ENCODE measurements at regions of chr17 and their contacts with region 1.

Region 1: GRCh38 chr17:76264755-76265596 is at the start of gene UBALD2:
- DNase-seq: peak; percentile 97 to 99 (median 98)
- ATAC-seq: peak; percentile 90
- H3K4me3 ChIP-seq: peak within 1 kb of the TSS; percentile 91
- H3K27ac ChIP-seq: peak within 1 kb of the TSS; percentile 83
- H3K4me1 ChIP-seq: peaks cover 37 to 38% of the 10 kb centered on the region in 2 experiments
- H3K27me3 ChIP-seq: no peaks in the 10 kb centered on the region
- CTCF ChIP-seq: no peak
- EP300 ChIP-seq: peak; percentile 8; the same call in 1 of the 2 replicates
- POLR2A ChIP-seq: peak; percentile 68
- RAD21 ChIP-seq: no peak
- polyA plus RNA-seq, gene UBALD2: 2.3 to 3.9 TPM

Region 2: GRCh38 chr17:76166168-76166567 is 98.8 kb before region 1 on chr17:
- CTCF ChIA-PET with region 1: no interaction called
- POLR2A ChIA-PET with region 1: interaction called, 13 read pairs
- in situ Hi-C with region 1: no loop called
- intact Hi-C with region 1: no loop called
- DNase-seq: no peak
- ATAC-seq: no peak
- H3K4me3 ChIP-seq: no peak overlapping the region
- H3K27ac ChIP-seq: no peak overlapping the region
- H3K4me1 ChIP-seq: peaks cover 5 to 9% of the 10 kb centered on the region in 2 experiments; a peak in 4 of 5 replicates
- H3K27me3 ChIP-seq: no peaks in the 10 kb centered on the region
- CTCF ChIP-seq: no peak
- EP300 ChIP-seq: no peak
- POLR2A ChIP-seq: no peak
- RAD21 ChIP-seq: no peak

Region 3: GRCh38 chr17:76191896-76192295 is 73.1 kb before region 1 on chr17:
- CTCF ChIA-PET with region 1: no interaction called
- POLR2A ChIA-PET with region 1: interaction called, 16 read pairs
- in situ Hi-C with region 1: loop called (anchors 5 kb)
- intact Hi-C with region 1: loop called (anchors 5 kb)
- DNase-seq: no peak
- ATAC-seq: no peak
- H3K4me3 ChIP-seq: no peak overlapping the region
- H3K27ac ChIP-seq: peak overlapping the region; percentile 1; the same call in 1 of the 3 replicates
- H3K4me1 ChIP-seq: peaks cover 44 to 63% of the 10 kb centered on the region in 2 experiments
- H3K27me3 ChIP-seq: no peaks in the 10 kb centered on the region
- CTCF ChIP-seq: no peak
- EP300 ChIP-seq: no peak
- POLR2A ChIP-seq: no peak
- RAD21 ChIP-seq: no peak

Region 4: GRCh38 chr17:76240461-76241203 is 24.3 kb before region 1 on chr17 and contains the start of gene RNF157:
- CTCF ChIA-PET with region 1: no interaction called
- POLR2A ChIA-PET with region 1: interaction called, 227 read pairs
- in situ Hi-C with region 1: no loop called
- intact Hi-C with region 1: loop called (anchors 2 kb)
- DNase-seq: peak; percentile 78 to 94 (median 92)
- ATAC-seq: peak; percentile 75
- H3K4me3 ChIP-seq: peak within 1 kb of the TSS; percentile 62
- H3K27ac ChIP-seq: peak within 1 kb of the TSS; percentile 91
- H3K4me1 ChIP-seq: peaks cover 25 to 33% of the 10 kb centered on the region in 2 experiments; a peak in 4 of 5 replicates
- H3K27me3 ChIP-seq: no peaks in the 10 kb centered on the region
- CTCF ChIP-seq: no peak
- EP300 ChIP-seq: no peak
- POLR2A ChIP-seq: peak; percentile 79
- RAD21 ChIP-seq: peak in 1 of 2 experiments; percentile 4; a peak in 1 of 4 replicates
- polyA plus RNA-seq, gene RNF157: 8.1 to 12.7 TPM

Region 5: DNA sequence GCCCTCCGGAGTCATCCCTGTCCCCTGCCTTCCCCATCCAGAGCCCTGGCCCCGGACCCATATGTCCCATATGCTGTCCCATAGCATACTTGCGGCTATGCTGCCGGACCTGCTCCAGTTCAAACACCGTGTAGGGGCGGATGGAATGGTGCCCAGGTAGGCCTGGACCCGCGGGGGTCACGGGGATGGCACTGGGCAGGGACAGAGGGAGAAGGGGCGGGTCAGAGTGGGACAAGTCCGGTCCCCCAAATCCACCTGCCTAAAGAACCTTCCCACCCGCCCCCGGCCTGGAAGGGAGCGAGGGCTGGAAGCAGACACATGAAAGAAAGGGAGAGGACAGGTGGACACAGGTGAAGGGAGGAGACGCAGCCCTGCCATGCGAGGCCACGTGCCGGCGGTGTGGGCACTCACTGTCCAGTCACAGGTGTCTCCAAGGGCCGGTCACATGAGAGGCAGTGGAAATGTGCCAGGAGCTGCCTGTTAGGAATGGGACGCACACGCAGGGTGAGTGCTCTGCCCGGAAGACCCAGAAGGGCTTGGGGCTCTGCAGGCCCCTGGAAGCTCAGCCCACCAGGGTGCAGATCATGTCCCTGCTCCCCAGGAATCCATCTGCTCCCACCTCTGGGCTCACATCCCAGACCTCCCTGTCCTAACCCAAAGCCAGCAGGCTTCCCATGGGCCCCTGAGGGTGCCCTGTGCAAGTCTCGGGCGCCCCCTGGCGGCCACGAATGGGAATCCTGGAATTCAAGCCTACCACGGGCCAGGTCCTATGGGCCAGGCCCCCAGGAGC is 14.2 kb after region 1 on chr17:
- CTCF ChIA-PET with region 1: no interaction called
- POLR2A ChIA-PET with region 1: interaction called, 91 read pairs
- in situ Hi-C with region 1: no loop called
- intact Hi-C with region 1: no loop called
- DNase-seq: peak; percentile 87 to 94 (median 90)
- ATAC-seq: peak; percentile 97
- H3K4me3 ChIP-seq: no peak overlapping the region
- H3K27ac ChIP-seq: no peak overlapping the region
- H3K4me1 ChIP-seq: peaks cover 12 to 75% of the 10 kb centered on the region in 2 experiments; a peak in 4 of 5 replicates
- H3K27me3 ChIP-seq: no peaks in the 10 kb centered on the region
- CTCF ChIP-seq: peak; percentile 96 to 97 (median 96)
- EP300 ChIP-seq: no peak
- POLR2A ChIP-seq: no peak
- RAD21 ChIP-seq: peak; percentile 98 to 100